Common myeloid progenitor, CD34-positive (primary cell): ENCODE measurements at regions of chr11 and their contacts with region 1.

Region 1: GRCh38 chr11:64152841-64153691 is 12.8 kb downstream of the MACROD1 start:
- DNase-seq: peak; percentile 31 to 61 (median 51)
- H3K4me3 ChIP-seq: no peak overlapping the region
- H3K27ac ChIP-seq: no peak overlapping the region
- H3K4me1 ChIP-seq: peaks cover 0 to 11% (median 4%) of the 10 kb centered on the region in 4 experiments
- H3K27me3 ChIP-seq: peaks cover 0 to 2% (median 0%) of the 10 kb centered on the region in 5 experiments

Region 2: GRCh38 chr11:64000026-64000739 is 152.9 kb before region 1 on chr11:
- CTCF ChIA-PET with region 1: interaction called, 130 read pairs
- POLR2A ChIA-PET with region 1: interaction called, 4 read pairs
- DNase-seq: peak; percentile 79 to 84 (median 82)
- H3K4me3 ChIP-seq: peak overlapping the region in 4 of 7 experiments; percentile 19 to 61 (median 54)
- H3K27ac ChIP-seq: no peak overlapping the region
- H3K4me1 ChIP-seq: peaks cover 0 to 53% (median 39%) of the 10 kb centered on the region in 4 experiments
- H3K27me3 ChIP-seq: peaks cover 0 to 61% (median 3%) of the 10 kb centered on the region in 5 experiments

Region 3: GRCh38 chr11:64036087-64037026 is 116.7 kb before region 1 on chr11:
- CTCF ChIA-PET with region 1: interaction called, 62 read pairs
- POLR2A ChIA-PET with region 1: no interaction called
- DNase-seq: peak; percentile 30 to 80 (median 67)
- H3K4me3 ChIP-seq: peak overlapping the region; percentile 28 to 70 (median 49)
- H3K27ac ChIP-seq: no peak overlapping the region
- H3K4me1 ChIP-seq: peaks cover 0 to 31% (median 24%) of the 10 kb centered on the region in 4 experiments
- H3K27me3 ChIP-seq: peaks cover 0 to 72% (median 25%) of the 10 kb centered on the region in 5 experiments

Region 4: DNA sequence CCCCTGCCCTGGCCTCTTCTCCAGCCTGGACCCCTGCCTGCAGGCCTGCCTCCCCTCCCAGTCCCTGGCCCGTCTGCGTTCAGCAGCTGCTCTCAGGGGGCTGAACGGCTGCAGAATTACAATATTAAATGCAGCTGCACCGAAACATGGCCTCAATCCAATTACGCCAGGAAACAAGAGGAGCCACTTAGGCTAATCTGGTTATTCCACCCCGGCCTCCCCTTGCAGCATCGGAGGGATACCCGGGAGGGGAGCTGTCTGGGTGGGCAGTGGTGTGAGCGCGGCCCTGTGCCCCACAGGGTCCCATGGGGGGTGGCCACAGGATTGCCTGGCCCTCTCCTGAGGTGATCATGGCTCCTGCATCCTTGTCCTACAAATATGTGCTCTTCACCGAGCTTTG is 74.8 kb before region 1 on chr11:
- CTCF ChIA-PET with region 1: no interaction called
- POLR2A ChIA-PET with region 1: no interaction called
- DNase-seq: no peak
- H3K4me3 ChIP-seq: no peak overlapping the region
- H3K27ac ChIP-seq: no peak overlapping the region
- H3K4me1 ChIP-seq: no peaks in the 10 kb centered on the region
- H3K27me3 ChIP-seq: no peaks in the 10 kb centered on the region

Region 5: DNA sequence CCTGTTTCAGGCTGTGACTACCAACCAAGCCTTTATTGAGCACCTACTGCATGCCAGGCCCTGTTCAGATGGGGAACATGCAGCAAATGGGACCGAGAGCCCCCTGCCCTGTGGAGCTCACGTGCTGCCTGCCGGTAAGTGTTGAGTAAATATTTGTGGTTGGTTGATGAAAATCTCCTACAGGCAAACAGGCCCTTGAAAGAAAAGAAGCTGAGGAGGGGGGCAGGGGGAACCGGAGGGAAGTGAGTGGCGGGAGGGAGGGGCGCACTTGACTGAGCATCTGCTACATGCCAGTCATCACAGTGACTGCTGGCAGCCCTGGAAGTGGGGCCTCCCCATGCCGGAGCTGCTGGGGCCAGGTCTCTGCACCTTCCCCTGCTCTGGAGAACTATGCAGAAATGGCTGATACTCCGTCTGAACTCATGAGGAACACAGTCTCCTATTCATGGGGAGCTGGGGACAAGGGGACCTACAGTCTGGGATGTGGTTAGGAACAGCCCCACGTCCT is 21.3 kb before region 1 on chr11:
- CTCF ChIA-PET with region 1: interaction called, 11 read pairs
- POLR2A ChIA-PET with region 1: no interaction called
- DNase-seq: peak; percentile 31 to 86 (median 84)
- H3K4me3 ChIP-seq: peak overlapping the region in 3 of 7 experiments; percentile 1 to 28 (median 6)
- H3K27ac ChIP-seq: no peak overlapping the region
- H3K4me1 ChIP-seq: peaks cover 0 to 36% (median 24%) of the 10 kb centered on the region in 4 experiments
- H3K27me3 ChIP-seq: no peaks in the 10 kb centered on the region

Region 6: DNA sequence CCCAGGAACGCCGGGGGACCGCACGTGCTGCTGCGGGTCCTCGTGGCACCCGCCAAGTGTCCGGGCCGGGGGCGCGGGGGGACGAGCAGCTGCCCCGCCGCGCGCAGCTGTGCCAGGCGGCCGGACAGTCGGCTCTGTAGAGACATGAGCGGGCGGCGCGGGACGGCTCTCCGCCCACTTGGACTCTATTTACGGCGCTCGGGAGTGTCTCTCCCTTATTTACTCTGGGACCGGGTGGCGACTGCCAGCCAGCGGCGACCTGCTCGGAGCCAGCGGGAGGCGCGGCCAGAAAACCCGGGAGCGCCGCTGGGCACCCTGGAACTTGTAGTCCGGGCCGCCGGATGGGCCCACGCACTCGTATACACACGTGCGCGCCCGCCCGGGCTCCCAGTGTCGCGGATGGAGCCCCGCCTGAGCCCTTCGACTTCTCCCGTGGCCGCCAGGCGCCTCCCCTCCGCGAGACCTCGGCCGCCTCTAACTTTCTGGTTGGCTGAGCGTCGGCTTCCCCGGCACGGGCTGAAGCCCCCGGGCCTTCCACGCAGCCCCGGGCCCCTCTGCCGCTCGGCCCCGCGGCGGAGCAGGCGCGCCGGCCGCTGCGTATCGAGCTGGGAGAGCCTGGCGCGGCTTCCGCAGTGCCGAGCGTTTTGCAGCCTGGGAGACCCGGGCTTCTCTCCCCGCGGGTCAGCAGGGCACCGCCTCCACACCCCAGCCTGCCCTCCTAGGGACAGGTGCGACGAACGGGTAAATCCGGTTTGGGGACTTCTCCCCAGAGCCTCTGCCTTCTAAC is 13.0 kb after region 1 on chr11 and contains the start of gene MACROD1:
- CTCF ChIA-PET with region 1: interaction called, 38 read pairs
- POLR2A ChIA-PET with region 1: no interaction called
- DNase-seq: peak; percentile 61 to 79 (median 70)
- H3K4me3 ChIP-seq: peak within 1 kb of the TSS; percentile 47 to 81 (median 66)
- H3K27ac ChIP-seq: peak within 1 kb of the TSS in 1 of 2 experiments; percentile 54
- H3K4me1 ChIP-seq: peaks cover 0 to 21% (median 16%) of the 10 kb centered on the region in 4 experiments
- H3K27me3 ChIP-seq: no peaks in the 10 kb centered on the region